H1 (cell line): ENCODE measurements at regions of chr2 and their contacts with region 1.

Region 1: DNA sequence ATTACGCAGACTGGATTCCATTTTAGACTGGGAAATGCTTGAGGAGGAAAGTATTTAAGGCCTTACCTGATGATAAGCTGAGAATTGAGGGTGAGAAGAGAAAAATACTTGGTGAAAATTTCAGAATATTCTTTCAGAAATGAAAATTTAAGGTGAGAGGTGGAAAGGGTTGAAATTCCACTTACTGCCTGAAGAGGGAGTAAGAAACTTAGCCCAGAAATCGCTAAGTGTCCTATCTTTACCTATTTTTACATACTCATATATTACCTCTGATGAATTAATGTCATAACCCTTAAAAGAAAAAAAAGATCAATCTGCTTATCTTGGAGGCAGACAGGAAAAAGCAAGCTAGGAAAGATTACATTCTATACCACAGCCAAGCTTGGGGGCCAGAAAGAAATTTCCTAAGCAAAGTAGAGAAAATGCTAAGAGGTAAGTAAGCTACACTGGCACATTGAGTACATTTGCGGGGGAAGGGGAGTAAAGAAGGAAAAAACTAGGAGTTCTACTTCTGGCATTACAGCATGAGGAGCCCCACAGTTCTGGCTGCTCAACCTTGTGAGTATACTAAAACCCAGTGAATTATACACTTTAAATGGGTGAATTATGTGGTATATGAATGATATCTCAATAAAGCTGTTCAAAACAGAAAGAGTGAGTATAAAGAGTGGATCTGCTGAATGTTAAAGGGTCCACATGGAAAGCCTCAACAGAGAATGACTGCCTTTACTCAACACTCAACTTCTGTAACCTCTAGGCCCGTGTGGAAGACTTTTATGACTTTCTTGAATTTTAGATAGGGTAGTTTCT is 33.8 kb downstream of the SMC6 start:
- DNase-seq: no peak
- H3K4me3 ChIP-seq: no peak overlapping the region
- H3K27ac ChIP-seq: no peak overlapping the region
- H3K4me1 ChIP-seq: no peaks in the 10 kb centered on the region
- H3K27me3 ChIP-seq: no peaks in the 10 kb centered on the region
- CTCF ChIP-seq: peak in 2 of 3 experiments; percentile 9 to 59; a peak in 2 of 4 replicates
- EP300 ChIP-seq: no peak
- POLR2A ChIP-seq: no peak
- RAD21 ChIP-seq: peak; percentile 44 to 50

Region 2: DNA sequence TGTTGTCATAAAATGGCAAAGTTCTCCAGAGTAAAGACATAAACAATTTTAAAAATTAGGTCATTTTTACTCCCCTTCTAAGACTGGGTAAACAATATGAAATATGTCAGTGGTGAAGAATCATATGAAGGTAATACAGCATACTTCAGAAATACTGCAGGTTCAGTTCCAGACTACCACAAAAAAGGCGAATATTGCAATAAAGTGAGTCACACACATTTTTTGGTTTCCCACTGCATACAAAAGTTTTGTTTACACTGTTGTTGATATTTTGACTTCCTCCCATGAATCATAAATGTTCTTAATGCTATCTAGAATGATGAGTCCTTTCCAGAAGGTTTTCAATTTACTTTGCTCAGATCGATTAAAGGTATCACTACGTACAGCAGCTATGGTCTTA is 39.6 kb before region 1 on chr2:
- CTCF ChIA-PET with region 1: interaction called, 10 read pairs
- POLR2A ChIA-PET with region 1: no interaction called
- DNase-seq: no peak
- H3K4me3 ChIP-seq: no peak overlapping the region
- H3K27ac ChIP-seq: no peak overlapping the region
- H3K4me1 ChIP-seq: no peaks in the 10 kb centered on the region
- H3K27me3 ChIP-seq: no peaks in the 10 kb centered on the region
- CTCF ChIP-seq: no peak
- EP300 ChIP-seq: no peak
- POLR2A ChIP-seq: no peak
- RAD21 ChIP-seq: no peak

Region 3: GRCh38 chr2:17733599-17733998 is 13.8 kb after region 1 on chr2:
- CTCF ChIA-PET with region 1: interaction called, 25 read pairs
- POLR2A ChIA-PET with region 1: interaction called, 3 read pairs
- DNase-seq: no peak
- H3K4me3 ChIP-seq: no peak overlapping the region
- H3K27ac ChIP-seq: no peak overlapping the region
- H3K4me1 ChIP-seq: no peaks in the 10 kb centered on the region; a peak in 1 of 7 replicates
- H3K27me3 ChIP-seq: no peaks in the 10 kb centered on the region
- CTCF ChIP-seq: no peak
- EP300 ChIP-seq: no peak
- POLR2A ChIP-seq: no peak
- RAD21 ChIP-seq: no peak

Region 4: DNA sequence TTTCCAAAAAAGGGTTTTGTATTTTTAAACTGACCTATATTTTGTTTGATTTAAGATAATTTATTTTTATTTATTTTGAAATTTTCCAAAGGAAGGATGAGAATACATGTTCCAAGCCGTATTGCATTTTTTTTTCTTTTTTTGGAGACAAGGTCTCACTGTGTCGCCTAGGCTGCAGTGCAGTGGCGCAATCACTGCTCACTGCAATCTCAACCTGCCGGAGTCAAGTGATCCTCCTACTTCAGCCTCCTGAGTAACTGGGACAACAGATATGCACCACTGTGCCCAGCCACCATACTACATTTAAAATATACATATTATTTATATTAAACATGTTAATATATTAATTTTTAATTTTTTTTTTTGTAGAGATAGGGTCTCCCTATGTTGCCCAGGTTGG is 49.1 kb after region 1 on chr2:
- CTCF ChIA-PET with region 1: interaction called, 11 read pairs
- POLR2A ChIA-PET with region 1: interaction called, 3 read pairs
- DNase-seq: no peak
- H3K4me3 ChIP-seq: no peak overlapping the region
- H3K27ac ChIP-seq: no peak overlapping the region
- H3K4me1 ChIP-seq: no peaks in the 10 kb centered on the region
- H3K27me3 ChIP-seq: no peaks in the 10 kb centered on the region
- CTCF ChIP-seq: no peak
- EP300 ChIP-seq: no peak
- POLR2A ChIP-seq: no peak
- RAD21 ChIP-seq: no peak